ENCODE measurements at regions of chr11 and their contacts with region 1.

Region 1: DNA sequence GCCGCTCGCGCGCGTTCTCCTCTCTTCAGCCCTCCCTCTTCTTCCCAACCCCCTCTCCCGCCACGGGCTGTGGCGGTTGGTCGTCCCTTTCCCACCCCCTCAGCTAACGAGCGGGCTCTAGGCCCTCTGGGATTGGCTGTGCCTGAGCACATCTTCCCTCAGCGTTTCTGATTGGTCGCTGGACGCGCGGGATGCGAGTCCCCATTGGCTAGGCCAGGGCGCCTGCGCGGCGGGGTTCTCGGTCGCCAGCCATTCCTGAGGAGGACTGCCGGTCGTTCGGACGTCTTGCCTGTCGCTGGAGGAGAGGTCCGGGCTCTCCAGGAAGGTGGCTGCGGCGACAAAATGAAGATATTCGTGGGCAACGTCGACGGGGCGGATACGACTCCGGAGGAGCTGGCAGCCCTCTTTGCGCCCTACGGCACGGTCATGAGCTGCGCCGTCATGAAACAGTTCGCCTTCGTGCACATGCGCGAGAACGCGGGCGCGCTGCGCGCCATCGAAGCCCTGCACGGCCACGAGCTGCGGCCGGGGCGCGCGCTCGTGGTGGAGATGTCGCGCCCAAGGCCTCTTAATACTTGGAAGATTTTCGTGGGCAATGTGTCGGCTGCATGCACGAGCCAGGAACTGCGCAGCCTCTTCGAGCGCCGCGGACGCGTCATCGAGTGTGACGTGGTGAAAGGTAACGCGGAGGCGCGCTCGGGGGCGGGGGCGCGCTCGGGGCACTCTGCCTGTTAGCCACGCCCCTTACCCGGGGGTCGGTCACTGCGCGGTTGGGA is at the start of gene RBM14:
- DNase-seq: peak; percentile 97
- ATAC-seq: peak; percentile 96
- H3K4me3 Mint-ChIP-seq: peak within 1 kb of the TSS; percentile 96
- H3K27ac Mint-ChIP-seq: peak within 1 kb of the TSS; percentile 97
- H3K4me1 Mint-ChIP-seq: peaks cover 35% of the 10 kb centered on the region
- H3K27me3 Mint-ChIP-seq: no peaks in the 10 kb centered on the region
- total RNA-seq, gene RBM14: 150 to 151 TPM

Region 2: GRCh38 chr11:66421492-66422205 is 194.9 kb before region 1 on chr11:
- POLR2A ChIA-PET with region 1: no interaction called
- DNase-seq: peak; percentile 95
- ATAC-seq: peak; percentile 65
- H3K4me3 Mint-ChIP-seq: no peak overlapping the region
- H3K27ac Mint-ChIP-seq: no peak overlapping the region
- H3K4me1 Mint-ChIP-seq: peaks cover 12% of the 10 kb centered on the region
- H3K27me3 Mint-ChIP-seq: peaks cover 30% of the 10 kb centered on the region

Region 3: GRCh38 chr11:66480117-66480938 is 136.2 kb before region 1 on chr11 and contains the start of gene DPP3:
- POLR2A ChIA-PET with region 1: interaction called, 13 read pairs
- DNase-seq: peak; percentile 96
- ATAC-seq: peak; percentile 97
- H3K4me3 Mint-ChIP-seq: peak within 1 kb of the TSS; percentile 94
- H3K27ac Mint-ChIP-seq: peak within 1 kb of the TSS; percentile 88
- H3K4me1 Mint-ChIP-seq: peaks cover 20% of the 10 kb centered on the region
- H3K27me3 Mint-ChIP-seq: no peaks in the 10 kb centered on the region
- total RNA-seq, gene DPP3: 44.9 to 45.7 TPM

Region 4: GRCh38 chr11:66545701-66546367 is 70.7 kb before region 1 on chr11 and contains the start of gene ZDHHC24:
- POLR2A ChIA-PET with region 1: interaction called, 11 read pairs
- DNase-seq: peak; percentile 90
- ATAC-seq: peak; percentile 86
- H3K4me3 Mint-ChIP-seq: peak within 1 kb of the TSS; percentile 83
- H3K27ac Mint-ChIP-seq: peak within 1 kb of the TSS; percentile 65
- H3K4me1 Mint-ChIP-seq: peaks cover 25% of the 10 kb centered on the region
- H3K27me3 Mint-ChIP-seq: peaks cover 7% of the 10 kb centered on the region
- total RNA-seq, gene ZDHHC24: 22.1 to 23.0 TPM

Region 5: DNA sequence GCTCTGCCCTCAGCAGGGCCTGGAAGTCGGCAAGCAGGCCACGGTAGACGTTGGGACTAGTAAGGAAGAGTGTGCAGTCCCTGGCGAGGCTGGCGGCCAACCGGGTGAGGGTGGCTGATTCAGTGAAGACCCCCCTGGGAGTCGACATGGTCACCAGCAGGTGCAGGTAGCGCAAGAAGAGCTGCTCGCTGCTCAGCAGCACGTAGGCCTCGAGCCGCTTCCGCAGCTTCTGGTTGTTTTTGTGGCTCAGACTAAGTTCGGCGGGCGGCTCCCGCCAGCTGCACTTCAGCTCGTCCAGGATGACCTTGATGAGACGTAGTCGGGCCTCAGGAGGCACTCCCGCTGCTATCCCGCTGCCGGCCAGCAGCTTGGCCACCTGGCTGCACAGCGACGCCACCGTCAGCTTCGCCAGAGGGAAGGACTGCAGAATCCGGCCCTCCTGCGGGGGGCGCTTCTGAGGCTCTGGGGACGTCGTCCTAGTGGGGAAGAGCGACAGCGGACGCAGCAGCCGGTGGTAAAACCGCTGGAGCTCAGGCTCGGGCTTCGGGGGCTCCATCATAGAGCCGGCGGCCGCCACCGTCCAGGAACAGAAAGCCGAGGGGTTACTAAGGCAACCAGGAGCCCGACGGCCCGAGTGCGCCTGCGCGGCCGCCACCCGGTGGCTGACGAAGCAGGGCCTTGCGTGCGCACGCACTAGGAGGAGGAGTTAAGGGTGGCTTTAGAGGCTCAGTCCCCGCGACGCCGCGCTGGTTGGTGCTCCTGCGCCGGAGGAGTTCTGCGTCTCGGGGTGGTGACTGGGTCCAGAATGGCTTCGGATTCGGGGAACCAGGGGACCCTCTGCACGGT is 23.9 kb before region 1 on chr11 and contains the starts of genes CCDC87 and CCS:
- POLR2A ChIA-PET with region 1: interaction called, 62 read pairs
- DNase-seq: peak; percentile 99
- ATAC-seq: peak; percentile 97
- H3K4me3 Mint-ChIP-seq: peak within 1 kb of the TSS; percentile 97
- H3K27ac Mint-ChIP-seq: peak within 1 kb of the TSS; percentile 96
- H3K4me1 Mint-ChIP-seq: peaks cover 24% of the 10 kb centered on the region
- H3K27me3 Mint-ChIP-seq: peaks cover 3% of the 10 kb centered on the region
- total RNA-seq, gene CCDC87: 0.09 to 0.14 TPM
- total RNA-seq, gene CCS: 46.6 to 47.5 TPM

Region 6: DNA sequence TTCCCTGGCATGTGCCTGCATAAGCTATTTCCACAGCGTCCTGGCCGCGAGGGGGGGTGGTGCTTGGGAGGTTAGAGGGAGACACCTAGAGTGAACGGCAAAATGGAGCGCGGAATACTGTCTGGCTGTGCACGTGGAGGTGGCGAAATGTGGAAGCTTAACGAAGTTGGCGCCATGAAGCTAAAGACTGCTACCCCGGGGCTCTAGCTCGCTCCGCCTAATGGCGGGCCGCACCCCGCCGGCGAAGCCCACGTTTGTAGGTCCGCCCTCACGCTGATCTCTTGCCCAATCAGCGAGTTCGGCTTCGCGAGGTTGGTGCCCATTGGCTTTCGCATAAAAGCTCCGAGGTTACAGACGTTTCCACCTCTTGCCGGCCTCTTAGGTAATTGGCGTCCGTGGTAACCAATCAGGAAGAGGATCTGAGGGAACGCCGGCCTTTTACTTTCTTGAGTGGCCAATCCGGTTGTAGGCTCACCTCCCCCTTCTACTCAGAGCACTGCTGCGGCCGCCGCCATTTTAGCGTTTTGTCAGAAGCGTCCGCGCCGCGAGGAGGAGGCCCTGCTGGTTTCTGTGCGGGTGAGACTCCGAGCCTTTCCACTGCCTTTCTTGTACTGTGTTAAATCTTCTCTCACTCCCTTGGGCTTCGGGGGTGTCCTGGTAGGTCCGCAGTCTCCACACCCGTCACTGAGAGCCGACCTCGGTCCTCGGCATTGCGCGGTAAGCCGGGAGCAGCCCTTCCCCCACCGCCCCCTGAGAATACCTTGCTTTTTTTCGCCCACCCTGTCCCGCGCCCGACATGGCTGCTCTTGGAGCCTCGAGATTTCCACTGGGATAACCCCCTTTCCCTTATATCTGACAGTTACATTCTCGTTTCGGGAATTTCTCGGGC is 21.9 kb after region 1 on chr11 and contains the start of gene RBM4:
- POLR2A ChIA-PET with region 1: interaction called, 211 read pairs
- DNase-seq: peak; percentile 90
- ATAC-seq: peak; percentile 95
- H3K4me3 Mint-ChIP-seq: peak within 1 kb of the TSS; percentile 91
- H3K27ac Mint-ChIP-seq: peak within 1 kb of the TSS; percentile 92
- H3K4me1 Mint-ChIP-seq: peaks cover 51% of the 10 kb centered on the region
- H3K27me3 Mint-ChIP-seq: no peaks in the 10 kb centered on the region
- total RNA-seq, gene RBM4: 152 to 158 TPM

Region 7: DNA sequence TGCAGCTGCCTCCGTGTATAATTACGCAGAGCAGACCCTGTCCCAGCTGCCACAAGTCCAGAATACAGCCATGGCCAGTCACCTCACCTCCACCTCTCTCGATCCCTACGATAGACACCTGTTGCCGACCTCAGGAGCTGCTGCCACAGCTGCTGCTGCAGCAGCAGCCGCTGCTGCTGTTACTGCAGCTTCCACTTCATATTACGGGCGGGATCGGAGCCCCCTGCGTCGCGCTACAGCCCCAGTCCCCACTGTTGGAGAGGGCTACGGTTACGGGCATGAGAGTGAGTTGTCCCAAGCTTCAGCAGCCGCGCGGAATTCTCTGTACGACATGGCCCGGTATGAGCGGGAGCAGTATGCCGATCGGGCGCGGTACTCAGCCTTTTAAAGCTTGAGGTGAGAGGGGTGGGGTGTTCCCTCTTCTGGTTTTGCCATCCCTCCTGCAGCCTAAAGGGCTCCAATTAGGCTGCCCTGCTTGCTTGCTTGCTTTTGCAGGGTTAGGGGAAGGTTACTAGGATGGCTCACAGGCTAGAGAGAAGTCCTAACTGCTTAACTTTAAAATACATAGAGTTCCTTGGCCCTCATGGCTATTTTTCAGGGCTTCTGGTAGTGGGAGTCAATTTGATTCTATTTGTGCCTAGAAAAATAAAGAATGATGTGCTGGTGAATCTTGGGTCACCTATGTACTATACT is 27.3 kb after region 1 on chr11:
- POLR2A ChIA-PET with region 1: interaction called, 211 read pairs
- DNase-seq: no peak
- ATAC-seq: no peak
- H3K4me3 Mint-ChIP-seq: peak overlapping the region; percentile 27
- H3K27ac Mint-ChIP-seq: no peak overlapping the region
- H3K4me1 Mint-ChIP-seq: peaks cover 64% of the 10 kb centered on the region
- H3K27me3 Mint-ChIP-seq: no peaks in the 10 kb centered on the region

Region 8: DNA sequence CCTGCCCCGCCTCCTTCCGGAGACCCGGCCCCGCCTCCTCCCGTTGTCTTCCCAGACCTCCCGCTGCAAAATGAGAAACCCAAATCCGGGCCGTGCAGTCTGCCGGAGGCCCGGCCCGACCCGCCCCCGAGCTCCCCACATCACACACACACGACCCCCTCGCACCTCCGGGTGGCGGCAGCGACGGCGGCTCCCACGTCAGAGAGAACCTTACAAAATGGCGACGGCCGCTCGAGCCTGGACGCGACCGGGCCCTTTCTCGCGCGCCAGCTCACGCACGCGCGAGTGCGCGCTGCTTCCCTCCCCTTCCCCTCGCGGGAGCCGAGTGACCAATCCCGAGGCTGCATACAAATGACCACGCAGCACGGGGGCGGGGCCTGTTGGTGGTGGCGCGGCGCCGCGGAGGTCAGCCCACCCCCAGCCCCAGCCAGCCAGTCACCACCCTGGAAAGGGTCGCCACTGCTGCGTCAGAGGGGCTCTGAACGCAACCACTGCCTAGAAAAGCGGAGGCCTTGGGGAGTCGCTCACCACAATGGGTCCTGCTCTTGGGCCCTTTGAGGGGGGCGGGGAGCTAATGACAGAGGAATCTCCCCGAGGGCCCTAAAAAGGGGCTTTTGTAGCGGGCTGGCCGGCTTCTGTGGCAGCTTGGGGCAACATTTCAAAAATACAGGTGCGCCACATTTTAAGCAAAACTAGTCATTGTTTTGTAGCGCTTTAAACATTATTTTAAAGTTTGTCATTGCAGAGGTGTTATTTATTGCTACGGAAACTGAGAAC is 61.2 kb after region 1 on chr11 and contains the start of gene RBM4B:
- POLR2A ChIA-PET with region 1: interaction called, 31 read pairs
- DNase-seq: peak; percentile 94
- ATAC-seq: peak; percentile 90
- H3K4me3 Mint-ChIP-seq: peak within 1 kb of the TSS; percentile 94
- H3K27ac Mint-ChIP-seq: peak within 1 kb of the TSS; percentile 99
- H3K4me1 Mint-ChIP-seq: peaks cover 31% of the 10 kb centered on the region
- H3K27me3 Mint-ChIP-seq: no peaks in the 10 kb centered on the region
- total RNA-seq, gene RBM4B: 21.1 to 23.4 TPM